Heart right ventricle (tissue), 16 donors: ENCODE measurements at regions of chr17 and their contacts with region 1.

Region 1: GRCh38 chr17:22278302-22279275 is 586.3 kb downstream of the KCNJ18 start:
- DNase-seq: no peak
- ATAC-seq: no peak
- H3K4me3 ChIP-seq: no peak overlapping the region
- H3K27ac ChIP-seq: no peak overlapping the region
- H3K4me1 ChIP-seq: no peaks in the 10 kb centered on the region
- H3K27me3 ChIP-seq: peaks cover 0 to 12% (median 0%) of the 10 kb centered on the region in 7 donors
- CTCF ChIP-seq: no peak

Region 2: DNA sequence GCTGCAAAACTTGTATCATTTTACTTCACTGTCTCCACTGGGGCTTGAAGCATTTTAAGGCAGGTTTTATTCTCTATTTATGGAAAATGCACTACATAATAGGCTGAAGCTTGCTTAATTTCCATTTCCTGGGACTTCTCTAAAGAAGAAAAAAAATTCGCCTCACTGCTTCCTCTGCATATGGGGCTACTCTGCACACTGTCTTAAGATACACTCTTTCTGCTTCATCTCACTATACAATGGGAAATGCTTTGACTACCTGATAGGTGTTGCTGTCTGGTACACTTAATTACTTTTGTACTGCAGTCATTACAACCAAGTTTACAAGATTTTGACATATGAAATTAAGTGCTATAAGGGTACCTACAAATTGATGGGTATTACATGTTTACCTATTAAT is 120.2 kb before region 1 on chr17:
- intact Hi-C with region 1: no loop called
- DNase-seq: no peak
- ATAC-seq: no peak
- H3K4me3 ChIP-seq: no peak overlapping the region
- H3K27ac ChIP-seq: no peak overlapping the region
- H3K4me1 ChIP-seq: no peaks in the 10 kb centered on the region
- H3K27me3 ChIP-seq: no peaks in the 10 kb centered on the region
- CTCF ChIP-seq: no peak

Region 3: GRCh38 chr17:22217135-22217534 is 61.5 kb before region 1 on chr17:
- intact Hi-C with region 1: loop called in 1 of 10 experiments (anchors 10 kb)
- DNase-seq: no peak
- ATAC-seq: no peak
- H3K4me3 ChIP-seq: no peak overlapping the region
- H3K27ac ChIP-seq: no peak overlapping the region
- H3K4me1 ChIP-seq: no peaks in the 10 kb centered on the region
- H3K27me3 ChIP-seq: peaks cover 0 to 21% (median 0%) of the 10 kb centered on the region in 7 donors
- CTCF ChIP-seq: no peak

Region 4: DNA sequence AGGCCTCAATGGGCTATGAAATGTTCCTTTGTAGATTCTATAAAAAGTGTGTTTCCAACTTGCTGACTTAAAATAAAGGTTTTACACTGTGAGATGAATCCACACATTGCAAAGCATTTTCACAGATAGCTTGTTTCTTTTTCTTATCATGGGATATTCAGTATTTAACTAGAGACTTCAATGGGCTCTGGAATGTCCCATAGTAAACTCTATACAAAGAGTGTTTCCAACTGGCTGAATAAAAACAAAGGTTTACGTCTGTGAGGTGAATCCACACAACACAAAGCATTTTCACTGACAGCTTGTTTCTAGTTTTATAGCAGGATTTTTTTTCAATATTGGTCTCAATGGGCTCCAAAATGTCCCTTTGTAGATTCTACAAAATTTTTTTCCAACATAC is 36.1 kb before region 1 on chr17:
- intact Hi-C with region 1: loop called in 1 of 10 experiments (anchors 5 kb)
- DNase-seq: no peak
- ATAC-seq: no peak
- H3K4me3 ChIP-seq: no peak overlapping the region
- H3K27ac ChIP-seq: no peak overlapping the region
- H3K4me1 ChIP-seq: no peaks in the 10 kb centered on the region
- H3K27me3 ChIP-seq: no peaks in the 10 kb centered on the region
- CTCF ChIP-seq: no peak

Region 5: DNA sequence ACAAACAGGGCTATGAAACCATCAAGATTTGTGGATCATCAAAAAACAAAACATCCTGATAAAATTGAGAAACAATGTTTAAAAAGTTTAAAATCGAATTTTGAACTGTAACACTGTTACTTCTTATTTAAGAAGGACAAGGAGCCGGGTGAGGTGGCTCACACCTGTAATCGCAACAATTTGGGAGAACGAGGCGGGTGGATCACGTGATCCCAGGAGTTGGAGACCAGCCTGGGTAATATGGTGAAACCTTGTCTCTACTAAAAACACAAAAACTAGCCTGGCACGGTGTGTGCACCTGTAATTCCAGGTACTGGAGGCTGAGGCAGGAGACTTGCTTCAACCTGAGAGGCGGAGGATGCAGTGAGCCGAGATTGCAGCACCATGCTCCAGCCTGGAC is 41.7 kb after region 1 on chr17:
- intact Hi-C with region 1: no loop called
- DNase-seq: no peak
- ATAC-seq: no peak
- H3K4me3 ChIP-seq: no peak overlapping the region
- H3K27ac ChIP-seq: no peak overlapping the region
- H3K4me1 ChIP-seq: no peaks in the 10 kb centered on the region
- H3K27me3 ChIP-seq: peaks cover 0 to 6% (median 0%) of the 10 kb centered on the region in 7 donors
- CTCF ChIP-seq: no peak

Region 6: DNA sequence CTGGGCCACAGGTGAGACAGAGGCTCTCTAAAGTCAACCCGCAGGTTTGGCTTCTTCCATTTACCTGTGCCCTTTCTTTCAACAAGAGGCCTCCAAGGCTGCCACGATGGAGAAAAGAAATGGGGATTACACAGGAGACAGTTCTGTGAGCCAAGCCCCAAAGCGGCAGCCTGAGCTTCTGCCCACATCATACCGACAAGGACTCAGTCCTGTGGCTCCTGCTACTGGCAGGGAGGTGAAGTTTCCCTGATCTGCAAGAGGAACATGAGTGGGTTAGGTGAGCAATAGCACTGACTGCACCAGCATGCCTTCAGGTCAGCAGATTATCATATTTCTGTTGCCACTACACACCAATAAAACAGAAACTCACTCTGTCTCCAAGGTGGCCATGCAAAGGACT is 213.7 kb after region 1 on chr17:
- intact Hi-C with region 1: no loop called
- DNase-seq: no peak
- ATAC-seq: no peak
- H3K4me3 ChIP-seq: no peak overlapping the region
- H3K27ac ChIP-seq: no peak overlapping the region
- H3K4me1 ChIP-seq: no peaks in the 10 kb centered on the region
- H3K27me3 ChIP-seq: no peaks in the 10 kb centered on the region
- CTCF ChIP-seq: no peak